ENCODE measurements at regions of chr16 and their contacts with region 1.

Region 1: DNA sequence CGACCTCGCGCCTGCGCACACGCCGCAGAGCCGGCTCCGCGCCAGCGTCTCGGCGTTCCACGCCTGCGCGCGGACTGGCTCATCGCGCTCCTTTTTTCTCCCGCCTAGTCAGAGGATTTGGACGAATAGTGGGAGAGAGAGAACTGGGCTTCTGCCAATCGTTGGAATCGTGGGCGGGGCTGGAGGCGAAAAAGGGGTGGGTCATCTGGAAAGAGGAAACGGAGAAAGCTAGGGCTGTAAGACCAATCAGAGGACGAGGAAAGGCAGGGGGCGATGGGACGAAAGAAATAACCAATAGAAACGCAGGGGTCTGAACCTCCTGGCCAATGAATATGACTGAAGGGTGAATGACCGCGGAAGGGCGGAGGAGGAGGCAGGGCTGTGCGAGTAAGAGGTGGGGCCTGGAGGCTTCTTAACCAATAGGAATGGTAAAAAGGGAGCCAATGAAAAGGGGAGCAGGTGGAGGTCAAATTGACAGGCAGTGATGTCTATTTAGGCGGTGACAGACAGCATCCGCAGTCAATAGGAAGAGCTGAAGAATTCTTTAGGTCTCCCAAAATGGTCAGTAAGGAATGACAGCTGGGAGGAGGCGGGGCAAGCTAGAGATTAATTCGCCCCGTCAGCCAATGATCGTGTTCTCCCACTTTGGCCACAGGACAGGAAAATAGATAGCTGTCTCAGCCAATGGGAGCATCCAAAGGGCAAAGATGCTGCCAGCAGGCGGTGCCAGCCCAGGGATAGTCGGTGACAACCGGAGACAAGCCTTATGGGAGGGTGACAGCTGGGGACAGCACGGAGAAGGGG is at the start of gene TBC1D10B:
- DNase-seq: peak; percentile 99
- ATAC-seq: peak; percentile 82
- H3K4me3 ChIP-seq: peak within 1 kb of the TSS; percentile 47 to 77 (median 70)
- H3K4me3 Mint-ChIP-seq: peak within 1 kb of the TSS; percentile 86
- H3K27ac ChIP-seq: peak within 1 kb of the TSS; percentile 60 to 71
- H3K27ac Mint-ChIP-seq: peak within 1 kb of the TSS; percentile 90
- H3K4me1 ChIP-seq: peaks cover 25 to 35% of the 10 kb centered on the region in 2 donors
- H3K4me1 Mint-ChIP-seq: peaks cover 49% of the 10 kb centered on the region
- H3K27me3 ChIP-seq: no peaks in the 10 kb centered on the region
- H3K27me3 Mint-ChIP-seq: no peaks in the 10 kb centered on the region
- CTCF ChIP-seq: peak; percentile 26
- total RNA-seq, gene TBC1D10B: 53.0 and 58.0 TPM in 2 replicates

Region 2: DNA sequence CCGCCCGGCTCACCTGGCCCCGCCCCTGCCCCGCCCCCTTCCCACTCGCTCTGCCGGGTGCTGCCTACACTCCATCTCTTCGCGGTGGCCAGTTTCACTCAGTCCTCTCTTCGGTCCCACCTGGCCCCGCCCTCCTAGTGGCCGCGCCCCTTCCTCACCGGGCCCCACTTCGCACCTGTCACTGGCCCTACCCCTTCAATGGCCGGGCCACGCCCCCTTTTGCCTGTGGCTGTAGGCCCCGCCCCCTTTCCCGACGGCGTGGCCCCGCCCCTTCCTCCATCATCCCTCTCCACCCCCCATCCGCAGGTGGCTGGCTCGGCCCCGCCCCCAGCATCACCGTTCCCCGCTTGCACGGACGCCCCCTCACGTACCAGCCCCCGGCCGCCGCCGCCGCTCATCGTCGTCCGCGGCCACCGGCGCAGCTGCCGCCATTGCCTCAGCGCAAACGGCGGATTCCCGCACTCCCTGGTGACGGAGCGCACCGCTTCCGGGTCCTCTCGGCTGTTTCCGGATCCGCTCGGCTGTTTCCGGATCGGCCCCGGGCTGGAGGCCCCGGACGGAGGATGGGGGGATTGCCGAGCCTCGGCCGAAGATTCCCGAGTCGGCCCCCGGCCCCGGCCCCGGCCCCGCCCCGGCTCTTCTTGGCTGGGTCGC is 1445.8 kb before region 1 on chr16 and contains the start of gene RABEP2:
- CTCF ChIA-PET with region 1: no interaction called
- POLR2A ChIA-PET with region 1: no interaction called
- intact Hi-C with region 1: loop called (anchors 10 kb)
- DNase-seq: peak; percentile 97
- ATAC-seq: peak; percentile 60
- H3K4me3 ChIP-seq: peak within 1 kb of the TSS; percentile 58 to 97 (median 92)
- H3K4me3 Mint-ChIP-seq: peak within 1 kb of the TSS; percentile 95
- H3K27ac ChIP-seq: peak within 1 kb of the TSS; percentile 87 to 91
- H3K27ac Mint-ChIP-seq: peak within 1 kb of the TSS; percentile 98
- H3K4me1 ChIP-seq: peaks cover 30 to 61% of the 10 kb centered on the region in 2 donors
- H3K4me1 Mint-ChIP-seq: peaks cover 51% of the 10 kb centered on the region
- H3K27me3 ChIP-seq: no peaks in the 10 kb centered on the region
- H3K27me3 Mint-ChIP-seq: no peaks in the 10 kb centered on the region
- CTCF ChIP-seq: no peak
- total RNA-seq, gene RABEP2: 132 and 136 TPM in 2 replicates

Region 3: GRCh38 chr16:30335598-30336474 is 34.8 kb before region 1 on chr16:
- CTCF ChIA-PET with region 1: no interaction called
- POLR2A ChIA-PET with region 1: interaction called, 4 read pairs
- intact Hi-C with region 1: loop called (anchors 2 kb)
- DNase-seq: peak; percentile 80
- ATAC-seq: no peak
- H3K4me3 ChIP-seq: peak overlapping the region in 4 of 5 experiments; percentile 62 to 73 (median 68)
- H3K4me3 Mint-ChIP-seq: peak overlapping the region; percentile 85
- H3K27ac ChIP-seq: peak overlapping the region; percentile 59 to 76
- H3K27ac Mint-ChIP-seq: peak overlapping the region; percentile 91
- H3K4me1 ChIP-seq: peaks cover 16 to 23% of the 10 kb centered on the region in 2 donors
- H3K4me1 Mint-ChIP-seq: peaks cover 28% of the 10 kb centered on the region
- H3K27me3 ChIP-seq: no peaks in the 10 kb centered on the region
- H3K27me3 Mint-ChIP-seq: no peaks in the 10 kb centered on the region
- CTCF ChIP-seq: no peak

Region 4: DNA sequence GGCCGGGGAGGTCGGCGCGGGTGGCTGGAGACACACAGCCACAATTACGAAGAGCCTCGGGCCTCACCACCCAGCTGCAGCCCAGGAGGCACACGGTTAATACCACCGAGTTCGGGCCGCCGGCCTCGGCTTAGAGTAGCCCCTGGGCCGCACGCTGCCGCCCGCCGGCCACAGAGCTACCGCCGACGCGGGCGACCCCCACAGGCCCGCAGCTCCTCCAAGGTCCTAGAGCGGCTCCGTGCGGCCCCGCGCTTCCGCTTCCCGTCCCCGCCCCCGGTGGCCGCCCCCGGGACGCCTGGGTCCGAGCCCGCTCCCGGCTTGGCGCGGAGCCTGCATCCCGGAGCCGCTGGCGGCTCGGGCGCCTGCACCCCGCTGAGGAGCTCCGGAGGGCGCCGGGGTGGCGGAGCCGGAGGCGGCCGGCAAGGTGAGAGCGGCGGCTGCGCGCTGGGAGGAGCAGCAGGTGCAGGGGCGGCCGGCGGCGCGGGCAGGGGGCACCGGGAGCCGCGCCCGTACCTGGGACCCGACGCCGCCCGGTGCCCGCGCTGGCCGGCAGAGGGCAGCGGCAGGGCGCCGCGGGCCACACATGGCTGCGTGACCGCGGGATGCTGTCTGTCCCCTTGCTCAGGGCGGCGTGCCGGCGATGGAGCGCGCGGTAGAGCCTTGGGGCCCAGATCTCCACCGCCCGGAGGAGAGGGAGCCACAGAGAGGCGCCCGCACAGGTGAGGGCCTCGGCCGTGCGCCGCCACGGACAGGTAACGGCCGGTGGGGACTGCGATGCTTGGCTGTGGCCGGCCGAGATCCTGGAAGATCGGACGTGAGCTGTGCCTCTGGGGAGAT is 24.7 kb after region 1 on chr16 and contains the start of gene ZNF48:
- CTCF ChIA-PET with region 1: interaction called, 15 read pairs
- POLR2A ChIA-PET with region 1: interaction called, 11 read pairs
- intact Hi-C with region 1: loop called (anchors 1 kb)
- DNase-seq: peak; percentile 87
- ATAC-seq: peak; percentile 95
- H3K4me3 ChIP-seq: peak within 1 kb of the TSS; percentile 32 to 75 (median 66)
- H3K4me3 Mint-ChIP-seq: peak within 1 kb of the TSS; percentile 92
- H3K27ac ChIP-seq: peak within 1 kb of the TSS in 1 of 2 donors; percentile 64
- H3K27ac Mint-ChIP-seq: peak within 1 kb of the TSS; percentile 91
- H3K4me1 ChIP-seq: peaks cover 13 to 31% of the 10 kb centered on the region in 2 donors
- H3K4me1 Mint-ChIP-seq: peaks cover 23% of the 10 kb centered on the region
- H3K27me3 ChIP-seq: no peaks in the 10 kb centered on the region
- H3K27me3 Mint-ChIP-seq: no peaks in the 10 kb centered on the region
- CTCF ChIP-seq: peak; percentile 26
- total RNA-seq, gene ZNF48: 13.3 and 14.2 TPM in 2 replicates

Region 5: DNA sequence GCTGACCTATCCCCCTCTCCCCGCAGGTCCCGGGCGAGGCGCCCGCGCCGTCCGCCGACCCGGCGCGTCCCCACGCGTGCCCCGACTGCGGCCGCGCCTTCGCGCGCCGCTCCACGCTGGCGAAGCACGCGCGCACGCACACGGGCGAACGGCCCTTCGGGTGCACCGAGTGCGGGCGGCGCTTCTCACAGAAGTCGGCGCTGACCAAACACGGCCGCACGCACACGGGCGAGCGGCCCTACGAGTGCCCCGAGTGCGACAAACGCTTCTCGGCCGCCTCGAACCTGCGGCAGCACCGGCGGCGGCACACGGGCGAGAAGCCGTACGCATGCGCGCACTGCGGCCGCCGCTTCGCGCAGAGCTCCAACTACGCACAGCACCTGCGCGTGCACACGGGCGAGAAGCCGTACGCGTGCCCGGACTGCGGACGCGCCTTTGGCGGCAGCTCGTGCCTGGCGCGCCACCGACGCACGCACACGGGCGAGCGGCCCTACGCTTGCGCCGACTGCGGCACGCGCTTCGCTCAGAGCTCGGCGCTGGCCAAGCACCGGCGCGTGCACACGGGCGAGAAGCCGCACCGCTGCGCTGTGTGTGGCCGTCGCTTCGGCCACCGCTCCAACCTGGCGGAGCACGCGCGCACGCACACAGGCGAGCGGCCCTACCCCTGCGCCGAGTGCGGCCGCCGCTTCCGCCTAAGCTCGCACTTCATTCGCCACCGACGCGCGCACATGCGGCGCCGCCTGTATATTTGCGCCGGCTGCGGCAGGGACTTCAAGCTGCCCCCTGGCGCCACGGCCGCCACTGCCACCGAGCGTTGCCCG is 47.1 kb after region 1 on chr16:
- CTCF ChIA-PET with region 1: interaction called, 8 read pairs
- POLR2A ChIA-PET with region 1: interaction called, 10 read pairs
- intact Hi-C with region 1: loop called (anchors 2 kb)
- DNase-seq: peak; percentile 95
- ATAC-seq: peak; percentile 87
- H3K4me3 ChIP-seq: peak overlapping the region; percentile 33 to 75 (median 66)
- H3K4me3 Mint-ChIP-seq: peak overlapping the region; percentile 77
- H3K27ac ChIP-seq: peak overlapping the region; percentile 47 to 73
- H3K27ac Mint-ChIP-seq: peak overlapping the region; percentile 72
- H3K4me1 ChIP-seq: peaks cover 5 to 12% of the 10 kb centered on the region in 2 donors
- H3K4me1 Mint-ChIP-seq: peaks cover 7% of the 10 kb centered on the region
- H3K27me3 ChIP-seq: no peaks in the 10 kb centered on the region
- H3K27me3 Mint-ChIP-seq: no peaks in the 10 kb centered on the region
- CTCF ChIP-seq: peak; percentile 17

Region 6: DNA sequence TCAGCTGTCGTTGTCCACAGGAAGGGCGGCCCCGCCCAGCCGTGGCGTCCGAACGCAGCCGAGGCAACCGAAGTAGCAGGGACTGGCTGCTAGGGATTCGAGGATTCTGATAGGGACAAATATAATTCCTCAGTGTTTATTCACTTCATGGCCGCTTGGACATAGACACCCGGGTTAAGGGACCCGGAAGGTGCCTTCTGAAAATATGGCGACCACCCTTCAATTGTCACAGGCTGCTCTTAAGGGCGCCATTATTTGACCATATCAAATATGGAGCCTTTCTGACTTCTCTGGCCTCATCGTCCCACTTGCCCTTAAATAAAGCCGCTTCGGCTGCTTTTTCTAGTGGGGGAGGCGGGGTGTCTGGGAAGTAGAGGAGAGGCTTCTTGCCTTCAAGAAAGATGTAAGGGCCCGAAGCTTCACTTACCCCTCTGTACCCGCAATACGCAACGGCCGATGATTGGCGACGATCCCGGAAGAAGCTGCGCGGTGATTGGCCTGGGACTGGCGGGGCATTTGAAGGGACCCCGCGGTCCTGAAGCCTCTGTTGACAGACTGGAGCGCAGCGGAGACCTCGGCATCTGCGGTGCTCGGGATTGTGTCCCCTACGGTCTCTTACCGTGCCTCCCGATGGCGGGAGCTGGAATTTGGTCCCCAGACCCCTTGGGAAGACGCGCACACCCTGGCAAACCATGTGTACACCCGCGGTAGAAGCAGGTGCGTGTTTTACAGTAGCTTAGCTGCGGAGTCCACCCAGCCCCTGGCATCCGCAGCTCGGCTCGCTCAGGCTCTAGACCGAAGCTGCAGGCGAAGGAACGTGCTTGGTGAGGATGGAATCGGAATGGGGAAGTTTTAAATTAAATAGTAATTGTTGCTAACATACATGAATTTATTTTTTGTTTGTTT is 201.3 kb after region 1 on chr16 and contains the start of gene ZNF688:
- CTCF ChIA-PET with region 1: no interaction called
- POLR2A ChIA-PET with region 1: no interaction called
- intact Hi-C with region 1: loop called (anchors 2 kb)
- DNase-seq: peak; percentile 97
- ATAC-seq: peak; percentile 86
- H3K4me3 ChIP-seq: peak within 1 kb of the TSS; percentile 72 to 89 (median 86)
- H3K4me3 Mint-ChIP-seq: peak within 1 kb of the TSS; percentile 91
- H3K27ac ChIP-seq: peak within 1 kb of the TSS; percentile 96 to 97
- H3K27ac Mint-ChIP-seq: peak within 1 kb of the TSS; percentile 99
- H3K4me1 ChIP-seq: peaks cover 29 to 43% of the 10 kb centered on the region in 2 donors
- H3K4me1 Mint-ChIP-seq: peaks cover 40% of the 10 kb centered on the region
- H3K27me3 ChIP-seq: no peaks in the 10 kb centered on the region
- H3K27me3 Mint-ChIP-seq: no peaks in the 10 kb centered on the region
- CTCF ChIP-seq: no peak
- total RNA-seq, gene ZNF688: 23.1 and 24.9 TPM in 2 replicates